CD4-positive, alpha-beta memory T cell (primary cell): ENCODE measurements at regions of chr18 and their contacts with region 1.

Region 1: GRCh38 chr18:23586249-23587196 is at the start of gene NPC1:
- DNase-seq: peak; percentile 91 to 95 (median 94)
- H3K4me3 ChIP-seq: peak within 1 kb of the TSS; percentile 77 to 87
- H3K4me3 Mint-ChIP-seq: peak within 1 kb of the TSS; percentile 87 to 96 (median 94)
- H3K27ac ChIP-seq: peak within 1 kb of the TSS; percentile 97
- H3K27ac Mint-ChIP-seq: peak within 1 kb of the TSS; percentile 95 to 98 (median 97)
- H3K4me1 ChIP-seq: peaks cover 46% of the 10 kb centered on the region
- H3K4me1 Mint-ChIP-seq: peaks cover 25 to 47% (median 37%) of the 10 kb centered on the region in 4 donors
- H3K27me3 ChIP-seq: no peaks in the 10 kb centered on the region
- H3K27me3 Mint-ChIP-seq: peaks cover 0 to 4% of the 10 kb centered on the region in 2 donors
- total RNA-seq, gene NPC1: 62.9 to 64.5 TPM

Region 2: GRCh38 chr18:23071285-23071684 is 515.2 kb before region 1 on chr18:
- CTCF ChIA-PET with region 1: no interaction called
- POLR2A ChIA-PET with region 1: no interaction called
- intact Hi-C with region 1: loop called (anchors 5 kb)
- DNase-seq: peak; percentile 87 to 93 (median 90)
- H3K4me3 ChIP-seq: peak overlapping the region in 1 of 2 donors; percentile 13
- H3K4me3 Mint-ChIP-seq: peak overlapping the region; percentile 37 to 95 (median 76)
- H3K27ac ChIP-seq: no peak overlapping the region
- H3K27ac Mint-ChIP-seq: peak overlapping the region; percentile 74 to 96 (median 92)
- H3K4me1 ChIP-seq: peaks cover 64% of the 10 kb centered on the region
- H3K4me1 Mint-ChIP-seq: peaks cover 51 to 79% (median 59%) of the 10 kb centered on the region in 4 donors
- H3K27me3 ChIP-seq: no peaks in the 10 kb centered on the region
- H3K27me3 Mint-ChIP-seq: no peaks in the 10 kb centered on the region

Region 3: GRCh38 chr18:23437357-23438045 is 149.0 kb before region 1 on chr18:
- CTCF ChIA-PET with region 1: no interaction called
- POLR2A ChIA-PET with region 1: no interaction called
- intact Hi-C with region 1: loop called (anchors 5 kb)
- DNase-seq: peak; percentile 61 to 77 (median 67)
- H3K4me3 ChIP-seq: peak overlapping the region; percentile 3 to 89
- H3K4me3 Mint-ChIP-seq: peak overlapping the region; percentile 89 to 90 (median 90)
- H3K27ac ChIP-seq: peak overlapping the region; percentile 46
- H3K27ac Mint-ChIP-seq: peak overlapping the region in 6 of 7 donors; percentile 27 to 78 (median 69)
- H3K4me1 ChIP-seq: peaks cover 16% of the 10 kb centered on the region
- H3K4me1 Mint-ChIP-seq: peaks cover 7 to 16% (median 11%) of the 10 kb centered on the region in 4 donors
- H3K27me3 ChIP-seq: no peaks in the 10 kb centered on the region
- H3K27me3 Mint-ChIP-seq: peaks cover 2 to 3% of the 10 kb centered on the region in 2 donors

Region 4: DNA sequence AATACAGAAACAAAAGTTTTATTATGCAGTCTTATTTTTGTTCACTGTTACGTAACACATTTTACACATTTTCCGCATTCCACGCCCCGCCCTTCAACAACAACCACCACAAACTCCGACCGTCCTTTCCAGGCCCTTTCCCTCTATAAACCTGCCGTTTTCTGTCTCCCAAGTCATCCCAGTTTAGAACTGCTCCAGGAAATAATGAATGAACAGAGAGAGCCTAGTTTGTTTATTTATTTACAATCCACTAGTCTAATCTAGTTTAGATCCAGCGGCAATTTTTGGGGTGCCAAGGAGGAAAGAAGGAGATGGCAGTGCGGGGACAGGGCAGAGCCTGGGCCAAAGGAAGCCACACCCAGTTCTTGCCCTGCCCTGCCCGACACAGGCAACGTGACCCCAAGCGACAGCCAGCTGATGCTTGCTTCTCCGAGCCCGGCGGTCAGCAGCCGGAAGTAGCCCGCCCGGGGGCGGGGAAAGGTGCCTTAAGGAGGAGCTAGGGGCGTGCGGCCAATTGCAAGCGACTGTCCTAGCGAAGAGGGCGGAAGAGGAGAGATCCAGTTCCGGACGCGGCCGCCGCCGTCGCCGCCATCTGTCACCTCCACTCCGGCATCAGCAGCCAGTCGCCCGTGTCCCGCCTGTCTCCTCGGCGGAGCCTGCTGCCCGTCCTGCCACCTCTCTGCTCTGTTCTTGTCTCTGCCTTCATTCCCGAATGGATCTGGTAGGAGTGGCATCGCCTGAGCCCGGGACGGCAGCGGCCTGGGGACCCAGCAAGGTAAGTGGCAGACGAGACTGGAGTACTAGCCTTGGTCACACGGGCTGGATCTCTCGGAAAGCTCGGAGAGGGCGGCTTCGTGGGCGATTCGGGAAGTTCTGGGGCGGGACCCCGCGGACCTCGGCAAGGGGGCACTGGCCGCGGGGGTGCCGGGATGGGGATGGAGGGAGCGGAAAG is 133.5 kb before region 1 on chr18 and contains the start of gene RIOK3:
- CTCF ChIA-PET with region 1: no interaction called
- POLR2A ChIA-PET with region 1: interaction called, 5 read pairs
- intact Hi-C with region 1: loop called (anchors 1 kb)
- DNase-seq: peak; percentile 79 to 91 (median 82)
- H3K4me3 ChIP-seq: peak within 1 kb of the TSS; percentile 95
- H3K4me3 Mint-ChIP-seq: peak within 1 kb of the TSS; percentile 94 to 100 (median 100)
- H3K27ac ChIP-seq: peak within 1 kb of the TSS; percentile 92
- H3K27ac Mint-ChIP-seq: peak within 1 kb of the TSS; percentile 89 to 98 (median 94)
- H3K4me1 ChIP-seq: peaks cover 41% of the 10 kb centered on the region
- H3K4me1 Mint-ChIP-seq: peaks cover 21 to 54% (median 35%) of the 10 kb centered on the region in 4 donors
- H3K27me3 ChIP-seq: no peaks in the 10 kb centered on the region
- H3K27me3 Mint-ChIP-seq: peaks cover 0 to 1% of the 10 kb centered on the region in 2 donors
- total RNA-seq, gene RIOK3: 73.2 to 84.4 TPM

Region 5: DNA sequence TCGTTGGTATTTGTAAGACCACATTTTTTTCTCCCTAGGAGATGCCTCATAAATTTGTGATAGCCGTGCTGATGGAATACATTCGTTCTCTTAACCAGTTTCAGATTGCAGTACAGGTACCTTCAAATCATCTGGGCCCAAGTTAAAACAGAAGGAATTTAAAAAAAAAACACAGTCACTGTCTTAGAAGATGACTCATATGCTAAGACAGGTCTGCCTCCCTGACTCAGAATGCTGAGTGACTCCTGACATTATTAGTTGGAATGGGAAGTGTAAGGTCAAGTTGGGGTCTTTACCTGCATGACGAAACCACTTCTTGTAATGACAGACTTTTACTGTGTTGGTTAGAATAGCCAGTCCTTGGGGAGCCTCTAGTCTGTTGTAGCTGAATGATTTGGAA is 56.9 kb before region 1 on chr18:
- CTCF ChIA-PET with region 1: no interaction called
- POLR2A ChIA-PET with region 1: no interaction called
- intact Hi-C with region 1: no loop called
- DNase-seq: no peak
- H3K4me3 ChIP-seq: no peak overlapping the region
- H3K4me3 Mint-ChIP-seq: no peak overlapping the region
- H3K27ac ChIP-seq: no peak overlapping the region
- H3K27ac Mint-ChIP-seq: peak overlapping the region in 5 of 7 donors; percentile 5 to 48 (median 14)
- H3K4me1 ChIP-seq: no peaks in the 10 kb centered on the region
- H3K4me1 Mint-ChIP-seq: peaks cover 0 to 2% (median 0%) of the 10 kb centered on the region in 4 donors
- H3K27me3 ChIP-seq: no peaks in the 10 kb centered on the region
- H3K27me3 Mint-ChIP-seq: no peaks in the 10 kb centered on the region

Region 6: DNA sequence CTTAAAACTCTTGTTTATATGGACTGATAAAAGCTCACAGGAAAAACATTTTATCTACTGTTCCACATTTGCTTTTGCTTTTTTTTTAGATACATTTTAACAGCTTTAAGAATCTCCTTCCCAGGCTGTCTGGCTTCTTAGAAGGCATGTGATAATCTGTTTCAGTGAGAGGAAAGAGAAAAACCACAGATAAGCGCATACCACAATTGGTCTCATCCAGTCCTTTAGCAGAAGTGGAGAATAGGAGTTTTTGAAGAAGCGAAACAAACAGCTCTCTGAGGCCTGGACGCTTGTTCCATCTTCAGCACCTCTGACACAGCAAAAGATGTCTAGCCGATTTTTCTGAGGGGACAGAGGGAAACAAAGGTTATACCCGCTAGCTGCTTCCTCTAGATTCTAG is 45.7 kb before region 1 on chr18:
- CTCF ChIA-PET with region 1: interaction called, 18 read pairs
- POLR2A ChIA-PET with region 1: interaction called, 6 read pairs
- intact Hi-C with region 1: loop called (anchors 1 kb)
- DNase-seq: peak in 4 of 5 donors; percentile 32 to 50 (median 44)
- H3K4me3 ChIP-seq: no peak overlapping the region
- H3K4me3 Mint-ChIP-seq: peak overlapping the region; percentile 21 to 86 (median 72)
- H3K27ac ChIP-seq: peak overlapping the region; percentile 45
- H3K27ac Mint-ChIP-seq: peak overlapping the region; percentile 71 to 96 (median 90)
- H3K4me1 ChIP-seq: peaks cover 36% of the 10 kb centered on the region
- H3K4me1 Mint-ChIP-seq: peaks cover 29 to 43% (median 36%) of the 10 kb centered on the region in 4 donors
- H3K27me3 ChIP-seq: no peaks in the 10 kb centered on the region
- H3K27me3 Mint-ChIP-seq: no peaks in the 10 kb centered on the region

Region 7: GRCh38 chr18:23563377-23564043 is 23.0 kb before region 1 on chr18:
- CTCF ChIA-PET with region 1: interaction called, 4 read pairs
- POLR2A ChIA-PET with region 1: interaction called, 4 read pairs
- intact Hi-C with region 1: loop called (anchors 2 kb)
- DNase-seq: peak in 3 of 5 donors; percentile 24 to 49 (median 25)
- H3K4me3 ChIP-seq: no peak overlapping the region
- H3K4me3 Mint-ChIP-seq: no peak overlapping the region
- H3K27ac ChIP-seq: no peak overlapping the region
- H3K27ac Mint-ChIP-seq: peak overlapping the region in 5 of 7 donors; percentile 6 to 70 (median 55)
- H3K4me1 ChIP-seq: peaks cover 10% of the 10 kb centered on the region
- H3K4me1 Mint-ChIP-seq: peaks cover 5 to 21% (median 13%) of the 10 kb centered on the region in 4 donors
- H3K27me3 ChIP-seq: no peaks in the 10 kb centered on the region
- H3K27me3 Mint-ChIP-seq: no peaks in the 10 kb centered on the region

Region 8: GRCh38 chr18:23573626-23574431 is 12.7 kb before region 1 on chr18:
- CTCF ChIA-PET with region 1: interaction called, 14 read pairs
- POLR2A ChIA-PET with region 1: interaction called, 23 read pairs
- intact Hi-C with region 1: loop called (anchors 1 kb)
- DNase-seq: peak; percentile 23 to 65 (median 47)
- H3K4me3 ChIP-seq: peak overlapping the region in 1 of 2 donors; percentile 4
- H3K4me3 Mint-ChIP-seq: peak overlapping the region; percentile 37 to 80 (median 70)
- H3K27ac ChIP-seq: peak overlapping the region; percentile 34
- H3K27ac Mint-ChIP-seq: peak overlapping the region; percentile 67 to 93 (median 84)
- H3K4me1 ChIP-seq: peaks cover 56% of the 10 kb centered on the region
- H3K4me1 Mint-ChIP-seq: peaks cover 36 to 66% (median 50%) of the 10 kb centered on the region in 4 donors
- H3K27me3 ChIP-seq: no peaks in the 10 kb centered on the region
- H3K27me3 Mint-ChIP-seq: no peaks in the 10 kb centered on the region

Region 9: DNA sequence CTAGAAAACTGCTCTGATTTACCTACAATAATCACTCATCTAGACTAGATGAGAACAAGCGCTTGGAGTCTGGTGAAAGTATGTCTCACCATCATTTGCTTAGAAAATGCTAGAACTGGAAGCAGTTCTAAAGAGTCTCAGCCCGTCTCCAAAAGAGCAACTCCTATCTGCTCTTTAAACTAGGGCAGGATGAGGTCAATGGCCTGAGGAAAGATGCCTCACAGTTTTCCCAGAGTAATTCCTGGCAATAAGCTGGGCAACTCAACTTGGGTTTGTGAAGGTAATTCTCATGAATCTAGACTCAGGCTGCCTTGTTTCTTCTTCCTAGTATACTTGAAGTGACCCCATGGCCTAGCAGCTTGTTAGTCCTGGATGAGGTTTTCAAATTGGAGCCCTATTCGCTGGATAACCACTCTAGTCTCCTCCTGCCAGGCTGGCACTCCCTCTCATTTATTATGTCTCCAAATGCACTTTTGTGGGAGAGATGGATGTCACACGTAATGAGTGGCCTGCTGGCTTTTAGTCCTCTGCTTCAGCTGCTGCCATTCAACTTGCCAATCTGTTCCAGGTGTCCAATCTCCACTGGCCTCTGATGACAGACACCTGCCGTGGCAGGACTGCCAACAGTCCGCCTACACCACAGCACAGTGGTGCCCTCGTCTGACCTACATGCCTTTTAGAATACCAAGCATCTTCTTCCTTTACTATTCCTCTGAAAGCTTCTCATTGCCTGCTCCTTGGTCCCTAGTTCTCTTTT is 633.2 kb after region 1 on chr18:
- CTCF ChIA-PET with region 1: no interaction called
- POLR2A ChIA-PET with region 1: no interaction called
- intact Hi-C with region 1: no loop called
- DNase-seq: no peak
- H3K4me3 ChIP-seq: no peak overlapping the region
- H3K4me3 Mint-ChIP-seq: no peak overlapping the region
- H3K27ac ChIP-seq: no peak overlapping the region
- H3K27ac Mint-ChIP-seq: no peak overlapping the region
- H3K4me1 ChIP-seq: no peaks in the 10 kb centered on the region
- H3K4me1 Mint-ChIP-seq: no peaks in the 10 kb centered on the region
- H3K27me3 ChIP-seq: no peaks in the 10 kb centered on the region
- H3K27me3 Mint-ChIP-seq: peaks cover 0 to 3% of the 10 kb centered on the region in 2 donors